A673 (cell line): ENCODE measurements at regions of chr6 and their contacts with region 1.

Region 1: DNA sequence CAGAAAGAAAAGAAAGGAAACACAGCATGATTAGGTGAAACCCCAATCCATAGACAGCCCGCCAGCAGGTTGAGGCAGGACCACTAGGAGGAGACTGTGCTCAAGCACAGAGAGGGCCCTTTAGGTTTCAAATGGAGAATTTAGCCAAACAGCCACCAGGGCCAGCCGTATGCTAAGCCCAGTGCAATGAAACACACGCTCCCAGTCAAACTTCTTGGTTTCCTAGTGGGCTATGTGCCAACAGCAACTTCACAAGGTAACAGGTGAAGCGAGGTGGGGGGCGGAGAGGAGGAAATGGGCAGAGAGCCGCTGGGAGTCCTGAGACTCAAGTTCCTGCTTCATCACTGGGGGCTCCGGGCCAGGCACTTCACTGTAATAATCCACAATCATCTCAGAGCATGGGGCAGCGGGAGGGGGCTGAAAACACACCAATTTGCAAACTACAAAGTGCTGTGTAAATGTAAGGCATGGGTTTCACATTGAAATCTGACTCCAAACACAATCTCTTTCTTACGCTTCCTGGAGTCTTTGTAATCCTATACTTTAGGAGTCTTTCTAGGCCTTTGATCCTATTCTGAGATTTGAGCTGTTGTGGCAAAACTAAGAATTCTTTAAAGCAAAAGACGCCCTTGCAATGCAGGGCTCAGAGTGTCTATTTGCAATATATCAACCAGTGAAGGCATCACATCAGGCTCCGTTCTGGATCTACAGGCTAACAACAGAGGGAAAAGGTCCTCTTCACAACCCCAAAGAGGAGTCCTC is 117.3 kb downstream of the OPRM1 start:
- DNase-seq: peak; percentile 70
- H3K4me3 ChIP-seq: no peak overlapping the region
- H3K27ac ChIP-seq: no peak overlapping the region
- H3K4me1 ChIP-seq: peaks cover 7% of the 10 kb centered on the region
- H3K27me3 ChIP-seq: no peaks in the 10 kb centered on the region
- CTCF ChIP-seq: peak; percentile 84

Region 2: DNA sequence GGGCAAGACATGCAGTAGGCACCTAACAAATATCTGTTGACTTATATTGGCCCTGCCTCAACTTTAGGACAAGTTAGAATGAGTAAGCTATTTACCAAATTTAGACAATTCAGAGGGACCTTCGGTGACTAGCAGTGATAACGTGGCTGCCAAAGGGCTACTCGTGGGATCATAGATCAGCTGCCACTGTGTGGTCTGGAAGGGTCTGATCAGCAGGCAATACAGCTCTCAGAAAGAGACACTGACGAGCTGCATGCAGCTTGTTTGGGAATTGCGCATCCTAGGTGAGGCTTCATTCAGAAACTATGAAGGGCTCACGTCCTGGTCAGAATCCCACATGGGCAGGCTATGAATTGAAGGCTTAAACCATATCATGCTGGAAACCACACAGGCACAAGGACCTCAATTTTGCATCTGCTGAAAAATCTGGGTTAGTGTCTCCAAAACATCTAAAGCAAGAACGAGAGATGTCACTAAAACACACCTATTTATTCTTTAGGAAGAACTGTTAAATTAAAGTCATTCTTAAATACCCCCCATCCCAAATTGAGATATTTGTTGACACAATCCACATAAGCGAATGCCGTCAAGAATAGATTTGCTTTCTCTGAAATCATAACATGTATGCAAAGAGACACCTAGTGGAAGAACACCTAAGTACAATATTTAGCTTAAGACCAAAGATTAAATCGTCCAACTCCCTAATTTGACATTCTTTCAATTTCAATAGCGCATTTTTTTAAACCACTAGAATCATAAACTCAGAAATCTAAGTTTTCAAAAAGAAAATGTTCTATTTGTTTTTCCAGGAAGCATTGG is 120.7 kb after region 1 on chr6:
- CTCF ChIA-PET with region 1: interaction called, 5 read pairs
- POLR2A ChIA-PET with region 1: no interaction called
- intact Hi-C with region 1: loop called (anchors 1 kb)
- DNase-seq: peak; percentile 55
- H3K4me3 ChIP-seq: peak overlapping the region; percentile 29
- H3K27ac ChIP-seq: no peak overlapping the region
- H3K4me1 ChIP-seq: no peaks in the 10 kb centered on the region
- H3K27me3 ChIP-seq: peaks cover 1% of the 10 kb centered on the region
- CTCF ChIP-seq: peak; percentile 73

Region 3: GRCh38 chr6:154354265-154354777 is 198.0 kb after region 1 on chr6:
- CTCF ChIA-PET with region 1: interaction called, 3 read pairs
- POLR2A ChIA-PET with region 1: interaction called, 12 read pairs
- intact Hi-C with region 1: no loop called
- DNase-seq: no peak
- H3K4me3 ChIP-seq: no peak overlapping the region
- H3K27ac ChIP-seq: no peak overlapping the region
- H3K4me1 ChIP-seq: peaks cover 6% of the 10 kb centered on the region
- H3K27me3 ChIP-seq: no peaks in the 10 kb centered on the region
- CTCF ChIP-seq: no peak

Region 4: GRCh38 chr6:154408891-154409500 is 252.7 kb after region 1 on chr6:
- CTCF ChIA-PET with region 1: no interaction called
- POLR2A ChIA-PET with region 1: no interaction called
- intact Hi-C with region 1: loop called (anchors 10 kb)
- DNase-seq: peak; percentile 33
- H3K4me3 ChIP-seq: no peak overlapping the region
- H3K27ac ChIP-seq: no peak overlapping the region
- H3K4me1 ChIP-seq: peaks cover 26% of the 10 kb centered on the region
- H3K27me3 ChIP-seq: no peaks in the 10 kb centered on the region
- CTCF ChIP-seq: peak; percentile 45

Region 5: GRCh38 chr6:154661768-154662167 is 505.5 kb after region 1 on chr6:
- CTCF ChIA-PET with region 1: no interaction called
- POLR2A ChIA-PET with region 1: no interaction called
- intact Hi-C with region 1: loop called (anchors 5 kb)
- DNase-seq: peak; percentile 84
- H3K4me3 ChIP-seq: no peak overlapping the region
- H3K27ac ChIP-seq: no peak overlapping the region
- H3K4me1 ChIP-seq: peaks cover 14% of the 10 kb centered on the region
- H3K27me3 ChIP-seq: no peaks in the 10 kb centered on the region
- CTCF ChIP-seq: peak; percentile 49

Region 6: GRCh38 chr6:154830771-154831170 is 674.5 kb after region 1 on chr6:
- CTCF ChIA-PET with region 1: no interaction called
- POLR2A ChIA-PET with region 1: no interaction called
- intact Hi-C with region 1: no loop called
- DNase-seq: peak; percentile 89
- H3K4me3 ChIP-seq: no peak overlapping the region
- H3K27ac ChIP-seq: peak overlapping the region; percentile 54
- H3K4me1 ChIP-seq: peaks cover 39% of the 10 kb centered on the region
- H3K27me3 ChIP-seq: no peaks in the 10 kb centered on the region
- CTCF ChIP-seq: no peak

Region 7: DNA sequence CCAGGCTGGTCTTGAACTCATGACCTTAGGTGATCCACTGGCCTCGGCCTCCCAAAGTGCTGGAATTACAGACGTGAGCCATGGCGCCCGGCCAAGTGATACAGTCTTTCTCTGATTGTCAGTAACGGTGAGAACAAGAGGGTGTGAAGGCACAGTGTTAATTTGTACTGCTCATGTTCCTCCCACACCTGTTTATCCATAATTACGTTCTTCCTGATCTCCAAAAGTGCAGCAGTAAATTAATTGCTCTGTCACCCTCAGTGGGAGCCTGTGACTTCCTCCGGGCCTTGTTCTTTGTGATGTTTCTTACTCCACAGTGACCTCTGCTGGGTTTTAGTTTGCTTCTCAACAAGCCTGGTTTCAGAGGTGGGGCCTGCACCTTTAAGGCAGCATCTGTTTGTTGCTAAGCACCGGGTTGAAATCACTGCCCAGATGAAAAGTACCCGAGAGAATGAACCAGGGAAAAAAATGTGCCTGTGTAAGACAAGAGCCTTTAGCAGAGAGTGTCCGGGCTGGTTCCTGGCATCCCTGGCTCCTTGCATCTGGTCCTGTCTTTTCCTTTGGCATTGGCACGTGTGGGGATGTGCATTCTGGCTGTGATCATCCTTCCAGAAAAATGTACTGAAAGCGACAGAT is 1018.4 kb after region 1 on chr6:
- CTCF ChIA-PET with region 1: no interaction called
- POLR2A ChIA-PET with region 1: no interaction called
- intact Hi-C with region 1: loop called (anchors 10 kb)
- DNase-seq: peak; percentile 90
- H3K4me3 ChIP-seq: no peak overlapping the region
- H3K27ac ChIP-seq: no peak overlapping the region
- H3K4me1 ChIP-seq: peaks cover 25% of the 10 kb centered on the region
- H3K27me3 ChIP-seq: no peaks in the 10 kb centered on the region
- CTCF ChIP-seq: peak; percentile 72